ENCODE measurements at regions of chr3 and their contacts with region 1.

Region 1: GRCh38 chr3:38738630-38739395 is 77.2 kb downstream of the SCN10A start:
- DNase-seq: peak; percentile 72
- ATAC-seq: no peak
- H3K4me3 Mint-ChIP-seq: no peak overlapping the region
- H3K27ac Mint-ChIP-seq: no peak overlapping the region
- H3K4me1 Mint-ChIP-seq: no peaks in the 10 kb centered on the region
- H3K27me3 Mint-ChIP-seq: peaks cover 23% of the 10 kb centered on the region

Region 2: DNA sequence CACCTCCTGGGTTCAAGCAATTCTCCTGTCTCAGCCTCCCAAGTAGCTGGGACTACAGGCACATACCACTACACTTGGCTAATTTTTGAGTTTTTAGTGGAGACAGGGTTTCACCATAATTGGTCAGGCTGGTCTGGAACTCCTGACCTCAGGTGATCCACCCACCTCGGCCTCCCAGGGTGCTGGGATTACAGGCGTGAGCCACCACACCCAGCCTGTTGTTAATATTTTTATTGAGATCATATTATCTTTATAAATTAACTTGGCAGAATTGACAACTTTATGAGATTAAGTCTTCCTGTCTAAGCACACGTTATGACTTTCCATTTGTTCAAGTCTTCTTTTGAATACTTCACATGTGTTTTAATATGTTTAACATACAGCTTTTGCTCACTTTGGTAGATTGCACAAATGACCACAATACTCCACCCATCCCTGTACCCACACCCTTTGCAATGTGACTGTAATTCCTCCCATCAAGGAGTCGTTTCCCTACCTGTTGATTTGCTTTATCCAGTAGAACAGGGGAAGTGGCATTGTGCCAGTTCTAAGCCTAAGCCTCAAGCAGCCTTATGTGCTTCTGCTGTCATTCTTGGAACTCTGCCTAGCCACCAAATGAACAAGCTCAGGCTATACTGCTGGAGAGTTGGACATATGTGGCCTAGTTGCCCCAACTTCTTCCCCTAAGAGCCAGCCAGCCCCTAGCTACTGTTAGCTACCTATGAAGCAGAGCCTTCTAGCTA is 384.1 kb before region 1 on chr3:
- CTCF ChIA-PET with region 1: no interaction called
- POLR2A ChIA-PET with region 1: no interaction called
- intact Hi-C with region 1: no loop called
- DNase-seq: no peak
- ATAC-seq: no peak
- H3K4me3 Mint-ChIP-seq: no peak overlapping the region
- H3K27ac Mint-ChIP-seq: no peak overlapping the region
- H3K4me1 Mint-ChIP-seq: no peaks in the 10 kb centered on the region
- H3K27me3 Mint-ChIP-seq: no peaks in the 10 kb centered on the region

Region 3: GRCh38 chr3:38843898-38844297 is 105.1 kb after region 1 on chr3:
- CTCF ChIA-PET with region 1: interaction called, 3 read pairs
- POLR2A ChIA-PET with region 1: no interaction called
- intact Hi-C with region 1: loop called in 1 of 2 experiments (anchors 2 kb)
- DNase-seq: no peak
- ATAC-seq: peak; percentile 72
- H3K4me3 Mint-ChIP-seq: no peak overlapping the region
- H3K27ac Mint-ChIP-seq: no peak overlapping the region
- H3K4me1 Mint-ChIP-seq: no peaks in the 10 kb centered on the region
- H3K27me3 Mint-ChIP-seq: peaks cover 21% of the 10 kb centered on the region

Measured in activated CD4-positive, alpha-beta T cell treated with anti-CD3 and anti-CD28 coated beads for 36 hours (primary cell).